Transverse colon (tissue), 4 donors: ENCODE measurements at regions of chr10 and their contacts with region 1.

Region 1: GRCh38 chr10:93437088-93437945 is 44.8 kb downstream of the MYOF start:
- DNase-seq: peak; percentile 64
- H3K4me3 ChIP-seq: no peak overlapping the region
- H3K27ac ChIP-seq: peak overlapping the region; percentile 86 to 96 (median 94)
- H3K4me1 ChIP-seq: peaks cover 22 to 66% (median 45%) of the 10 kb centered on the region in 4 donors
- H3K27me3 ChIP-seq: no peaks in the 10 kb centered on the region
- CTCF ChIP-seq: no peak
- EP300 ChIP-seq: peak; percentile 80
- POLR2A ChIP-seq: no peak

Region 2: GRCh38 chr10:93471110-93471651 is 33.9 kb after region 1 on chr10:
- in situ Hi-C with region 1: no loop called
- intact Hi-C with region 1: loop called (anchors 5 kb)
- DNase-seq: no peak
- H3K4me3 ChIP-seq: no peak overlapping the region
- H3K27ac ChIP-seq: peak overlapping the region; percentile 76 to 88 (median 83)
- H3K4me1 ChIP-seq: peaks cover 29 to 77% (median 48%) of the 10 kb centered on the region in 4 donors
- H3K27me3 ChIP-seq: no peaks in the 10 kb centered on the region
- CTCF ChIP-seq: no peak
- EP300 ChIP-seq: peak; percentile 59
- POLR2A ChIP-seq: no peak